Ovary (tissue), 10 donors: ENCODE measurements at regions of chr1 and their contacts with region 1.

Region 1: DNA sequence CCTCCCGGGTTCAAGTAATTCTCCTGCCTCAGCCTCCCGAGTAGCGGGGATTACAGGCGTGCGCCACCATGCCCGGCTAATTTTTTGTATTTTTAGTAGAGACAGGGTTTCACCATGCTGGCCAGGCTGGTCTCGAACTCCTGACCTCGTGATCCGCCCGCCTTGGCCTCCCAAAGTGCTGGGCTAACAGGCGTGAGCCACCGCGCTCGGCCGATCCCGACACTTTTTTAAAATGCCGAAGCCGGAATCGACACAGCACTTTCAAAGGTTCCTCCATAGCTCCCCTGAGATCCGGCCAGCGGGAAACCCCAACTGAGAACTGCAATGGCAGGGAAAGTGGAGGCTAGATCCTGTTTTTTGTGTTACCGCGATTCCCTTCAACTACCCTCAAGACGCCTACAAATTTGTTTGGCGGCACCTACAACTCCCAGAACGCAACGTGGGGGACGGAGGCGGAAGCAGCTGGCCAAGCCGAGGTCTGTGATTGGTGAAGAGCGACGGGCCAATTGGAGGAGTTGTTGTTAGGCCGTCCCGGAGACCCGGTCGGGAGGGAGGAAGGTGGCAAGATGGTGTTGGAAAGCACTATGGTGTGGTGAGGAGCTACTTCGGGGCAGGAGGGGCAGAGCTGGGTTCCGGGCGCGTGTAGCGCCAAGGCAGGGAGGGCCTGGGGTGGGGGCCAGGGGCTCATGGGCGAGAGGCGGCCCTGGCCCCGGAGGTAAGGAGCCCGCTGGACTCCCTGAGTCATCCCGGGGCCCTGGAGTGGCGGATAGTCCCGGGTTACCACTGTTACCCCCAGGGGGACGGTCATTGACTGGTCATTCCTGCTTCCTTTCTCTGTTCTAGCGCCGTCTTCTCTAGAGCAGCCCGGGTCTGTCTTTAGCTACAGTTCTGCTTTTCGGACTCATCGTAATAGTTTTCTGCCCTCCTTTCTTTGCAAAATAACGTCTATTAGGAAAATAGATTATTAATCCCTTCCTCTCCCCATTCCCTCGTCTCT is at the start of gene PSMD4:
- DNase-seq: peak; percentile 93 to 96 (median 94)
- H3K4me3 ChIP-seq: peak within 1 kb of the TSS; percentile 84
- H3K27ac ChIP-seq: peak within 1 kb of the TSS; percentile 51 to 57
- H3K4me1 ChIP-seq: peaks cover 4% of the 10 kb centered on the region
- H3K27me3 ChIP-seq: no peaks in the 10 kb centered on the region
- CTCF ChIP-seq: no peak
- EP300 ChIP-seq: no peak
- POLR2A ChIP-seq: peak; percentile 69
- total RNA-seq, gene PSMD4: 78.1 to 117 (median 108) TPM

Region 2: DNA sequence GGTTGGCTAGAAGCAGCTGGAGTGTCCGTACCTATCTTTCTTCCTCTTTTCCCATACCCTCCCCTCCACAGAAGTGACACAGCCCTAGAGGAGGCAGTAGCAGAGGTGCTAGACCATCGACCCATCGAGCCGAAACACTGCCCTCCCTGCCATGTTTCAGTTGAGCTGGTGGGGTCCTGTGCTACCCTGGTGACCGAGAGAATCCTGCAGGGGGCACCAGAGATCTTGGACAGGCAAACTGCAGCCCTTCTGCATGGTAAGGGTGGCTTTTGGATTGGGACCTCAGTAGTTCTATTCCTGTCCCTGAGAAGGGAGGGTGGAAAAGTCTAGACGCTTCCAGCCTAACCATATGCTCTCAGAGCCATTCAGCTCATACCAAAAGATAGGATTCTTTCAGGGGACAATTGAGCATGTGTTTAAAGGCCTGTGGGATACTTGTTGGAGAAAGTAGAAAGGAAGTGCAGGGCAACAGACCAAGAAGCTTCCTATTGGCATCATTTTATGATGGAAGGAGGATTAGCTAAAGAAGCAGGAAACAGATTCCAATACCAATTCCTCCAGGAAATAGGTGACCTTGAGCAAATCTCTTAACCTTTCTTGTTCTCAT is 229.9 kb before region 1 on chr1:
- intact Hi-C with region 1: no loop called
- DNase-seq: peak; percentile 67 to 82 (median 81)
- H3K4me3 ChIP-seq: no peak overlapping the region
- H3K27ac ChIP-seq: no peak overlapping the region
- H3K4me1 ChIP-seq: no peaks in the 10 kb centered on the region
- H3K27me3 ChIP-seq: no peaks in the 10 kb centered on the region
- CTCF ChIP-seq: peak in 2 of 3 donors; percentile 40 to 59
- EP300 ChIP-seq: no peak
- POLR2A ChIP-seq: no peak

Region 3: DNA sequence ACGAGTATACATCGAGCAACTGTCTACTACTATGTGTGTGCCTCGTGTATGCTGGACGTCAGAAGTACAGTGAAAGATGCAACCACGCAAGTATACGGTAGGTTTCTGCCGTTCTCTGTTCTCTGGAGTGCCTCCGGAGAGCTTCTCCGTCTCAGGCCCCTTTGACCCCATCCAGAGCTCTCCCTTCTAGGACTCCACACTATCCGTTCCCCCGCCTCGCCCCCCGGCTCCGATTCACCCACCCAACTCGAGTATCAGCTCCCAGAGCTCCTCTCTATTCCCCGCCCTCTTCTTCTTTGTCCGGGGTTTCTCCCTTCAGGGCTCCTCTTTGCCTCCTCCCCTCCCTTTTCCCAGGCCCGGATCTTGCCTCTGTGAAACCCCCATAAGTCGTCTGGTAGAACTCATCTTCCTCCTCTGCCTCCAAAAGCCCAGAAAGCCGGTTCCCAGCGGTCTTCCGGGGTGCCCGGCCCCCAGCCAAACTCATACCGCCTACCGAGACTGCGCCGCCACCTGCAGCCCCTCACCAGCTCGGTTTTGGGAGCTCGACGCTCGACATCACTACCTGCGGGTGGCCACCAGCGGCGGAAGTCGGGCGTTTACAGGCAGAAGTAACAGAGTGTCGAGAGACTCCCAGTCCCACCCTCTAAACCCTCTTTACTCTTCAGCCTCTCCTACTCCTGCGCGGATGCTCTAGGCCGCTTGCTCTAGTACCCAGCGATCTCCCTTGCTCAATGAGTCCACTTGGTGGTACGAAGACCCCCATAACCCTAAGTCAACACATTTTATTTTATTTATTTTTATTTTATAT is 64.7 kb before region 1 on chr1 and contains the start of gene VPS72:
- intact Hi-C with region 1: loop called in 3 of 4 experiments (anchors 5 to 10 kb)
- DNase-seq: peak; percentile 74 to 85 (median 82)
- H3K4me3 ChIP-seq: peak within 1 kb of the TSS; percentile 98
- H3K27ac ChIP-seq: peak within 1 kb of the TSS; percentile 42 to 52
- H3K4me1 ChIP-seq: peaks cover 6% of the 10 kb centered on the region
- H3K27me3 ChIP-seq: no peaks in the 10 kb centered on the region
- CTCF ChIP-seq: peak in 2 of 3 donors; percentile 30 to 63
- EP300 ChIP-seq: no peak
- POLR2A ChIP-seq: peak; percentile 43
- total RNA-seq, gene VPS72: 24.5 to 53.1 (median 48.9) TPM

Region 4: GRCh38 chr1:151198255-151199127 is 56.0 kb before region 1 on chr1 and contains the start of gene PIP5K1A:
- intact Hi-C with region 1: loop called in 3 of 4 experiments (anchors 5 to 10 kb)
- DNase-seq: peak; percentile 98 to 100 (median 99)
- H3K4me3 ChIP-seq: peak within 1 kb of the TSS; percentile 76
- H3K27ac ChIP-seq: peak within 1 kb of the TSS; percentile 49 to 81
- H3K4me1 ChIP-seq: peaks cover 6% of the 10 kb centered on the region
- H3K27me3 ChIP-seq: no peaks in the 10 kb centered on the region
- CTCF ChIP-seq: no peak
- EP300 ChIP-seq: no peak
- POLR2A ChIP-seq: peak; percentile 84
- total RNA-seq, gene PIP5K1A: 33.0 to 62.8 (median 47.5) TPM

Region 5: DNA sequence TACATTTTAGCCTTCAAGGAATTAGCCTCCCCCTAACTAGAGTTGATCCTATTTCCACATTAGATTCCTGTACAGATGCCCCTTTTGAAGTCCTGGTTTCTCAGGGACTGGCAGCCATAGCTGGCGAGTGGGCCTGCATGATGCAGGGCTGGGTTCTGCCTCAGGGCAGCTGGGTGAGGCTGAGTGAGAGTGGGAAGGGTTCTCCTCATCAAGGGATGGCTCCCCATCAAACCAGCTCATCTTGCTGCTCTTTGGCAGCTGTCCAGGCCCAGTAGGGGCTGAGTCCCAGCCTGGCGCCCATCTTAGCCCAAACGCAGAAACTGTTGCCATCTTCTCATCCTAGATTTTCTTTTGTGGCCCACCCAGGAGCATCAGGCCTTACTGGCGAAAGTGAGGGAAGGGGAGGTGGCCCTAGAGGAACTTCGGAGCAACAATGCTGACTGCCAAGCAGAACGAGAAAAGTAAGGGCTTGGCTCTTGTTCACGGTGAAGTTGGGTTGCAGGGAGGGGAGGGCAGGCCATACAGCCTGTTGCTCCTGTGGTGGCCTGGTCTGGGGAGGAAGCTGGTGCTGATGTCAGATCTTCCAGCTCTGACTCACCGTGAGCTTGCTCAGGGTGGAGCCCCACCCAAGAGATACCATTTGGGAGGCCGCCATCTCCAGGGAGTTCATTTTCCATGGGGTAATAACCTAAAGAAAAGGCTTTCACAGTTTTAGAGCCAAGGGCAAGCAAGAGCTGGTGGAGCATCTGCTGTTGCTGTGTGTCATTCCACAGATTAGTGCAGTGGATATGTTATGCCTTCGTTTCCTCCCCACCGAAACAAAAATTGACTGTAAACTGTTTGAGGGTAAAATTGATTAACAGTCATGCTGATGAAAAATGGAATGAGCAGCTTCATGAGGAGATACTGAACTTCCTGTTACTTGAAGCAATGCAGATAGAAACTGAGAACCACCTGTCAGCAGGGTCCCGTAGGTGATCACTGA is 320.3 kb after region 1 on chr1:
- intact Hi-C with region 1: no loop called
- DNase-seq: no peak
- H3K4me3 ChIP-seq: no peak overlapping the region
- H3K27ac ChIP-seq: no peak overlapping the region
- H3K4me1 ChIP-seq: no peaks in the 10 kb centered on the region
- H3K27me3 ChIP-seq: no peaks in the 10 kb centered on the region
- CTCF ChIP-seq: no peak
- EP300 ChIP-seq: no peak
- POLR2A ChIP-seq: no peak

Region 6: DNA sequence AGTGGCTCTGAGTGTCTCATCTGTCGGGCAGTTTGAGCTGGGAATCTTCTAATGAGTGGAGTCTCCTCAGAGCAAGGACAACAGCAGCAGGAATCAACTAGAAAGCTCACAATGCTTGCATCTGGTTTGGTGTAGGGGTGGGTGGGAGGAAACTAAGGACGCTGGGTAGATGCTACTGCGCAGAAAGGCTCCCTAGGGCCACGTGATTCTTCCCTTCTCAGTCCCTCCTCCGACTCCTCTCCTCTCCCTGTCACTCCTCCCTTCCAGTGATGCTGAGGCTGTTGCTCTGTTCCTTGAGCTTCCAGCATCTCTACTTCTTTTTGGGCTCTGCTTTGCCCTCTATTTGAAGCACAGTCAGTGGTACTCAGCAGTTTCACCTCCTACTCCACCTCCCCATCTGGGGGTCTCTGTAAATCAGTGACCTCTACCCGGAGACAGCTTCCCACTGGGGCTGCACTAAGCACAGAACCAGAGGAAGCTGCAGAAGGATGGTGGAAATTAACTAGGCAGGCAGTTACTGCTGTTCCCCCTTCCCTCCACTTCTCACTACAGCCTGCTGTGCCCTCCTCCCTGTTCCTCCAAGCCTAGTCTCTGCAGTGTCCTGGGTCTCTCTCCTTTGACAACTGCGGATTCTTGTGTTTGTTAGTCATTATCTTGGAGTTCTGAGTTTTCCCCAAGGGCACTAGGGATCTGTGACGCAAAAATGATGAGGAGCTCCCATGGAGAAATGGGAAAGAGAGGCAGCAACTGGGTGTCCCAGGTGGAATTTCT is 544.8 kb after region 1 on chr1:
- intact Hi-C with region 1: no loop called
- DNase-seq: no peak
- H3K4me3 ChIP-seq: no peak overlapping the region
- H3K27ac ChIP-seq: no peak overlapping the region
- H3K4me1 ChIP-seq: no peaks in the 10 kb centered on the region
- H3K27me3 ChIP-seq: no peaks in the 10 kb centered on the region
- CTCF ChIP-seq: no peak
- EP300 ChIP-seq: no peak
- POLR2A ChIP-seq: no peak